Lower leg skin (tissue), 4 donors: ENCODE measurements at regions of chr5 and their contacts with region 1.

Region 1: GRCh38 chr5:145867806-145868205 is 5.0 kb downstream of the GRXCR2 start:
- DNase-seq: no peak
- H3K4me3 ChIP-seq: no peak overlapping the region
- CTCF ChIP-seq: no peak
- POLR2A ChIP-seq: no peak

Region 2: GRCh38 chr5:145912019-145912418 is 44.2 kb after region 1 on chr5:
- intact Hi-C with region 1: loop called (anchors 5 kb)
- DNase-seq: no peak
- H3K4me3 ChIP-seq: no peak overlapping the region
- CTCF ChIP-seq: no peak
- POLR2A ChIP-seq: no peak